Cardiac septum (tissue), 1 donor: ENCODE measurements at regions of chr15 and their contacts with region 1.

Region 1: GRCh38 chr15:99452774-99453636 is 112.8 kb upstream of the MEF2A start:
- DNase-seq: peak; percentile 93

Region 2: GRCh38 chr15:99442252-99442897 is 10.6 kb before region 1 on chr15:
- intact Hi-C with region 1: loop called (anchors 1 kb)
- DNase-seq: peak; percentile 90

Region 3: GRCh38 chr15:99473981-99474906 is 21.2 kb after region 1 on chr15:
- intact Hi-C with region 1: loop called (anchors 2 kb)
- DNase-seq: peak; percentile 89

Region 4: DNA sequence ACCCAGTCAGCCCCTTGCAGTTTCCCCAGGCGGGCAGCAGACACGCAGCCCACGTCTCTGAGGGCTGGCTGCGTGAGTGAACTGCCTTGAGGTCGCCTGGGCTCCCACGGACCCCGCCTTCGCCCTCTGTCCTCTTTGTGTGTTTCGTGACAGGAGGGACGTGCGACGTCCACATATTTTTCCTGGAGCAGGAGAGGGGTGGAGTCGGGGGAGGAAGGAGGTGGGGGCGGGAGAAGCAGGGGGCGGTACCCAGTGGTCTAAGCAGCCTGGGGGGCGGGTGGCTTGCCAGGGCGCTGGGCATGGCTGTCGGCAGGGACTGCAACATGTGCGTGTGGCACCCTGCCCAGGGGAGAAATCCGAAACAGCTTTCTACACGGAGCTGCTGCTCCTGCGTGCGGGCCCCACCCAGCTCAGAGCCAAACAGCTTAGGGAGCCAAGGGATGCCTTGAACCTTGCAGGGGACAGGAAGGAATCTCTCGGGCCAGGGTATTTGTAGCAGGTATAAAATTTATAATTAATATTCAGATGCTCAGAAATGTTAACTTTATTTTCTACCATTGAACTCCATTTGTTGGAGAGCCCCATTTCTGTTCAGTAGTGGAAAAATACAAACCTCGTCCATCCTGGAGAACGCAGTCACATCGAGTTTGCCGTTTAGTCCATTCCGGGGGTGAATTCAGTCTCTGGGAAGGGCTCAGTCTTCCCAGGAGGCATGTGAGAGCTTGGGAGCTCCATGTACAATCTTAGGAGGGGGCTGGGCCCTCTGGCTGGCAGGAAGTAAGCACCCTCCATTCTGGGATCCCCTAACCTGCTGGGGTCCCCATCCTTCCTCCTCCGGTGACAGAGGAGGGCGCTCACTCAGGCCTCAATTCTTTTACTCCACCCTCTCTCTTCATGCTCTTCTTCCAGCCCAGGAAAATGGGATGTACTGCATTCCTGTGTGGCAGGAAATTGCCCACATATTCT is 33.6 kb after region 1 on chr15:
- intact Hi-C with region 1: loop called (anchors 2 kb)
- DNase-seq: peak; percentile 90

Region 5: DNA sequence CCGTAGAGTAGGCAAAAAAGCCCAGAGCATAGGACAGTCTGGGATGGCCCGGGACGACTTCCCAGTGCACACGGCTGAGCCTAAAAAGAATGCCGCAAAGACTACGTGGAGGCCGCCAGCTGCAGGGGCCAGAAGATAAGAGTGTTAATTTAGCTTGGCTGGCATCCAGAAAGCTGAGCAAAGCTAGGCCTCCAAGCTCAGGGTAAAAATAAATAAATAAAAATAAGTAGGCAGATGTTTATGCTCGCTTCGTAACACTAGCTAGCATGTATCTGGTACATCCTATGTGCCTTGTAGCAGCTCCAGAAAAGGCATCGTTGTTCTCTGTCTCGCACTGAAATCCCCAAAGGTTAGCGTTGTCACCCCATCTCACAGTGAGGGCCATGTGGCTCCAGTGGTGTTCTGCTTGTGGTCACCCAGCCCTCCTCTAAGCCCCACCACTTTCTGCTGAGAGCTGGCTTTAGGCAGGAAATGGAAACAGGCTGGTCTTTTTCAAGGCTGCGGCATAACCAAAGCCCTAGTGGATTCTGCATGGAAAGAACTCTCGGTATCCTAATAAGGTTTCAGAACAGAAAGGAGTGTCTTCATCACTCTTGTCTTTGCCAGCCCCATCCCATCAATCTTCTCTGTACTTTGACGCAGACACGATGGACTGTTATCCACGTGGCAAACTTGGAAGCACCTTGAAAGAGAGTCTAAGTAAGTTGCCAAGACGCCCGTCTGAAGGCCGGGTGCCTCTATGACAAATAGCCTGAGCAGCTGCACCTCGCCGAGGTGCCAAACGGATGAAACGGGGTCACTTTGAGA is 54.7 kb after region 1 on chr15:
- intact Hi-C with region 1: loop called (anchors 2 kb)
- DNase-seq: no peak

Region 6: DNA sequence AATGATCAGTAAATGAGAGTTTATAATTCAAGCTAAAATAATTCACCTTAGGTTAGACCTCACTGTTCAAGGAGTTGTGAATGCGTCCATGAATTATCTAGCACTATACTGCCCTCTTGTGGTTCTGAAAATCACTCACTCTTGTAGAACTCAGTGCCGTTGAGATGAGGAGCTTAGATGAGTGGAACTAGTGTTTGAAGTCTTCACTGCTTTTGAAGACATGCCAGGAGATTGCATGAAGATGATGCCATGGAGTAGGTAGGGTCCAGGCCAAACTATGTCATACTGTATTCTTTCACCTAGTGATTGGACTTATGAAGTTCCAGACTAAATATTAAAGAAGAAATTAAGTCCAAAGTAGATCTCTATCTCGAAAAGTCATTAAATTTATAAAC is 251.4 kb after region 1 on chr15:
- intact Hi-C with region 1: loop called (anchors 5 kb)
- DNase-seq: no peak